HepG2 (cell line): ENCODE measurements at regions of chr14 and their contacts with region 1.

Region 1: DNA sequence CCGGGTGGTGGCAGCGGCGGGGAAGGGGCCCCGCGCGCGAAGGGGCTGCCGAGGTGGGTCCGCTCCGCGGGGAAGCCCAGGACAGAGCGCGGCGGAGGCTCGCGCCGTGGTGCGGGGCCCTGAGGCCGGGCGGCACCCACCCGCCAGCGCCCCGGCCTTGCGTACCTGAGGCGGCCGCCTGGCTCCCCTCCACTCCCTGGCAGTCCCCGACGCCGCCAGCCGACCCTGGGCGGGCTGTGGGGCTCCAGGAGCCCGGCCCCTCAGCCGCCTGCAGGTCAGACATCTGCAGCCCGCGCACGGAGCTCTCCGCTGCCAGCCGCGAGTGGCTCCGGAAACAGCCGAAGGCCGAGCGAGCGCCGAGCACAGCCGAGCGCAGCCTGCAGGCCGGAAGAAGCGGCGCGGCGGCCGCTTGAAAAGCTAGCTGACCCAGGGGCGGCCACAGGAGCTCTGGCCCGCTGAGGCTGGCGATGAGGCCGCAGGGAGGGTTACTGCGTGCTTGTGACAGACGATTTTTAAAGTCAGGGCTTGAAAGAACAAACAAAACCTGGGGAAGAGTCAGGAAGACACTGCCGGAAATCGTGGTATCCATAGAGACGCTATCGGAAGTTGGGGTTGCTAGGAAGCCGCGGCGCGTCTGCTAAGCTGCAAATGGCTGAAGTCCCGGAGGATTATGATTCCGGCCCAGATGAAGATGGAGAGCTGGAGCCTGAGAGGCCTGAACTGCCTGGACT is at the starts of genes SAMD15 and TMED8:
- DNase-seq: peak; percentile 69
- ATAC-seq: peak; percentile 99
- H3K4me3 ChIP-seq: peak within 1 kb of the TSS; percentile 97 to 99 (median 99)
- H3K27ac ChIP-seq: peak within 1 kb of the TSS; percentile 82
- H3K4me1 ChIP-seq: peaks cover 53% of the 10 kb centered on the region
- H3K27me3 ChIP-seq: no peaks in the 10 kb centered on the region
- CTCF ChIP-seq: peak; percentile 51
- EP300 ChIP-seq: no peak
- POLR2A ChIP-seq: peak in 1 of 2 experiments; percentile 65; a peak in 1 of 4 replicates
- RAD21 ChIP-seq: peak; percentile 72
- total RNA-seq, gene SAMD15: 1.3 and 2.0 TPM in 2 replicates
- total RNA-seq, gene TMED8: 11.7 and 17.5 TPM in 2 replicates

Region 2: GRCh38 chr14:77268989-77269600 is 107.8 kb before region 1 on chr14:
- CTCF ChIA-PET with region 1: no interaction called
- POLR2A ChIA-PET with region 1: no interaction called
- in situ Hi-C with region 1: no loop called
- intact Hi-C with region 1: no loop called
- DNase-seq: no peak
- ATAC-seq: peak; percentile 44
- H3K4me3 ChIP-seq: no peak overlapping the region
- H3K27ac ChIP-seq: no peak overlapping the region
- H3K4me1 ChIP-seq: no peaks in the 10 kb centered on the region
- H3K27me3 ChIP-seq: peaks cover 9 to 39% of the 10 kb centered on the region in 2 experiments; a peak in 4 of 5 replicates
- CTCF ChIP-seq: no peak
- EP300 ChIP-seq: no peak
- POLR2A ChIP-seq: no peak
- RAD21 ChIP-seq: no peak

Region 3: GRCh38 chr14:77320238-77320935 is 56.5 kb before region 1 on chr14 and contains the start of gene POMT2:
- CTCF ChIA-PET with region 1: no interaction called
- POLR2A ChIA-PET with region 1: interaction called, 21 read pairs
- in situ Hi-C with region 1: no loop called
- intact Hi-C with region 1: loop called (anchors 5 kb)
- DNase-seq: peak; percentile 88
- ATAC-seq: peak; percentile 83
- H3K4me3 ChIP-seq: peak within 1 kb of the TSS; percentile 79 to 93 (median 90)
- H3K27ac ChIP-seq: peak within 1 kb of the TSS; percentile 96
- H3K4me1 ChIP-seq: peaks cover 80% of the 10 kb centered on the region
- H3K27me3 ChIP-seq: no peaks in the 10 kb centered on the region
- CTCF ChIP-seq: peak; percentile 32; the same call in 1 of the 2 replicates
- EP300 ChIP-seq: no peak
- POLR2A ChIP-seq: peak in 1 of 2 experiments; percentile 78; a peak in 3 of 4 replicates
- RAD21 ChIP-seq: peak; percentile 54
- total RNA-seq, gene POMT2: 7.9 and 15.9 TPM in 2 replicates

Region 4: GRCh38 chr14:77339407-77339806 is 37.5 kb before region 1 on chr14:
- CTCF ChIA-PET with region 1: no interaction called
- POLR2A ChIA-PET with region 1: no interaction called
- in situ Hi-C with region 1: no loop called
- intact Hi-C with region 1: loop called (anchors 5 kb)
- DNase-seq: no peak
- ATAC-seq: no peak
- H3K4me3 ChIP-seq: no peak overlapping the region
- H3K27ac ChIP-seq: no peak overlapping the region
- H3K4me1 ChIP-seq: peaks cover 13% of the 10 kb centered on the region
- H3K27me3 ChIP-seq: no peaks in the 10 kb centered on the region
- CTCF ChIP-seq: no peak
- EP300 ChIP-seq: no peak
- POLR2A ChIP-seq: no peak
- RAD21 ChIP-seq: no peak